ENCODE measurements at regions of chr10 and their contacts with region 1.

Region 1: GRCh38 chr10:35642027-35642792 is at the start of gene FZD8:
- DNase-seq: peak; percentile 92
- H3K4me3 Mint-ChIP-seq: peak within 1 kb of the TSS; percentile 85
- H3K27ac Mint-ChIP-seq: peak within 1 kb of the TSS; percentile 31
- H3K4me1 Mint-ChIP-seq: peaks cover 6% of the 10 kb centered on the region
- H3K27me3 Mint-ChIP-seq: no peaks in the 10 kb centered on the region
- CTCF ChIP-seq: no peak
- total RNA-seq, gene FZD8: 9.8 and 13.0 TPM in 2 replicates

Region 2: DNA sequence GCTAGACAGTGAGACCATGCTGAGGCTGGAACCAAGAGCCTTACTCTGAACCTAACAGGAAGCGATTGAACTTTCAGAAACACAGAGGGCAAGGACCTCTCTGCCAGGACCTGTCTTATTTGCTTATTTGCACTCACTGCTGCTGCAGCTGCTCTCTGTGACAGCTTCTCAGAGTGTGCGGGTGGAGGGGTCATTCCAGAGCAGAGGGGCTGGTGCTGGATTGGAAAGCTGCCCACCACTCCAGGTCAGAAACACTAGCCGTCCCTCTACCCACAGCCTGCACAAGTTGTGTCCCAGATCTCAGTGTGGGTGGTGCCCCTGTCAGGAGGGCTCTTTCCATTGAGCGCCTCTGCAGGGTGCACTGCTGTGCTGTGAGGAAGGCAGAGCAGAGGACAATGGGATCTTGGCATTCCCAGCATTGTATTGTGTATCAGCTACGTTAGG is 179.7 kb before region 1 on chr10:
- CTCF ChIA-PET with region 1: no interaction called
- POLR2A ChIA-PET with region 1: no interaction called
- intact Hi-C with region 1: no loop called
- DNase-seq: no peak
- H3K4me3 Mint-ChIP-seq: no peak overlapping the region
- H3K27ac Mint-ChIP-seq: no peak overlapping the region
- H3K4me1 Mint-ChIP-seq: peaks cover 21% of the 10 kb centered on the region
- H3K27me3 Mint-ChIP-seq: no peaks in the 10 kb centered on the region
- CTCF ChIP-seq: no peak

Region 3: DNA sequence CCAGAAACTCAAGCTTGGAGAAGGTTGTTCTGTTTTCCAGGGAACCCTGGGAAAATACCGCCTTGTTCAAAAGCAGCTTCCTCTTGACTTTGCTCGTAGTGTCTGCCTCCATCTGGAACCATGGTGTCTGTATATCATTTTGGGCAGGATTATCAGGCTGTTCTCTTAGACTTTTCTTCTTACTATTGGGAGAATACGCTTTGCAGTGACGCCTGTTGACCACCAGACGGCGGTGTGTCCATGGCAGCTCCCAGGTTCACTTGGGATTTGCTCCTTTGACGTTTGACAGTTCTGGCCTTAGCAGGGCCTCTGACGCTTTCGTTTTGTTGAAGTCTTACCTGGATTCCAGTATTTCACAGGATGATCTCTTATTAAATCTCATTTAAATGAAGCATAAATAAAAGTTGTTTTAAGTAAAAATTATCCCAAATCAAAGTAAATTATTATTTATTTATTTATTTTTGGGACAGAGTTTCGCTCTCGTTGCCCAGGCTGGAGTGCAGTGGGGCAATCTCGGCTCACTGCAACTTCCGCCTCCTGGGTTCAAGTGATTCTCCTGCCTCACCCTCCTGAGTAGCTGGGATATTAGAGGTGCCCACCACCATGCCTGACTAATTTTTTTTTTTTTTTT is 78.8 kb before region 1 on chr10:
- CTCF ChIA-PET with region 1: no interaction called
- POLR2A ChIA-PET with region 1: no interaction called
- intact Hi-C with region 1: no loop called
- DNase-seq: peak; percentile 79
- H3K4me3 Mint-ChIP-seq: no peak overlapping the region
- H3K27ac Mint-ChIP-seq: no peak overlapping the region
- H3K4me1 Mint-ChIP-seq: no peaks in the 10 kb centered on the region
- H3K27me3 Mint-ChIP-seq: no peaks in the 10 kb centered on the region
- CTCF ChIP-seq: peak; percentile 97

Region 4: GRCh38 chr10:35626971-35627507 is 15.2 kb before region 1 on chr10:
- CTCF ChIA-PET with region 1: no interaction called
- POLR2A ChIA-PET with region 1: no interaction called
- intact Hi-C with region 1: no loop called
- DNase-seq: no peak
- H3K4me3 Mint-ChIP-seq: no peak overlapping the region
- H3K27ac Mint-ChIP-seq: no peak overlapping the region
- H3K4me1 Mint-ChIP-seq: no peaks in the 10 kb centered on the region
- H3K27me3 Mint-ChIP-seq: no peaks in the 10 kb centered on the region
- CTCF ChIP-seq: no peak

Region 5: DNA sequence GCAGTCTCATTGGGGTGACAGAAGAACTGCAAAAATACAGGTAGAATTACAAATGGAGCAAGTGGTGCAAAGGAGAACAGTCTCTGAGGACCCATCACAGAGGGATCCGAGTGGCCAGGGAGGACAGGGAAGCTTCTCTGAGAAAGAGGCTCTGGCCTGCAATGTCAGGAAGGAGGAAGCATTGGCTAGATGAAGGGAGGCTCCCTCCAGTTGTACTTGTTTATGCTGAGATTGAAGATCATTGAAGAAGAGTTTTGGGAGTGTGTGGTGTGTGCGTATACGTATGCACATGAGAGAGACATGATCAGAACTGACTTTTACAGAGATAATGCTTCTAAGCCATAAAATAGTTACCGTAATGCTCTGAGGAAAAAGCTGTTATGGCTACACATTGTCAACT is 274.6 kb after region 1 on chr10:
- CTCF ChIA-PET with region 1: no interaction called
- POLR2A ChIA-PET with region 1: no interaction called
- intact Hi-C with region 1: loop called (anchors 2 kb)
- DNase-seq: no peak
- H3K4me3 Mint-ChIP-seq: no peak overlapping the region
- H3K27ac Mint-ChIP-seq: no peak overlapping the region
- H3K4me1 Mint-ChIP-seq: peaks cover 13% of the 10 kb centered on the region
- H3K27me3 Mint-ChIP-seq: no peaks in the 10 kb centered on the region
- CTCF ChIP-seq: no peak

Region 6: GRCh38 chr10:36271627-36272340 is 629.6 kb after region 1 on chr10:
- CTCF ChIA-PET with region 1: no interaction called
- POLR2A ChIA-PET with region 1: no interaction called
- intact Hi-C with region 1: loop called (anchors 5 kb)
- DNase-seq: peak; percentile 65
- H3K4me3 Mint-ChIP-seq: peak overlapping the region; percentile 32
- H3K27ac Mint-ChIP-seq: peak overlapping the region; percentile 98
- H3K4me1 Mint-ChIP-seq: peaks cover 26% of the 10 kb centered on the region
- H3K27me3 Mint-ChIP-seq: no peaks in the 10 kb centered on the region
- CTCF ChIP-seq: no peak

Region 7: DNA sequence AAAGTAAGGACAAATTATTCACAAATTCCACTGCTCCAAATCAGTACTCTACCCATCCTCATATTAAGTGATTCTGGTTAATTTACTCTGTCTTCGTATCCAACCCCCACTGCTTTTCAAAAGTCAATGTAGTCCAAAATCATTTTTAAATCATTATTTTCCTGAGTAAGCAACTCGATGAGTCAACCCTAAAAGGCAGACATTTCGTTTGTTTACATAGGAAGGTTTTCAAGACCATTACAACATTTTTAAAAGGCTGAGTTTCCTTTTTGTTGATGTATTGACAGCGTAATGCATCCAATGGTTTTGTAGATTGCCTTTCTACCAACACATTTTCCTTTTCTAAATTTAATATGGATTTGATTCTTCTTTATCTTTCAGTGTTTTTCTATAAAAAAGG is 960.2 kb after region 1 on chr10:
- CTCF ChIA-PET with region 1: no interaction called
- POLR2A ChIA-PET with region 1: no interaction called
- intact Hi-C with region 1: loop called (anchors 10 kb)
- DNase-seq: peak; percentile 69
- H3K4me3 Mint-ChIP-seq: no peak overlapping the region
- H3K27ac Mint-ChIP-seq: peak overlapping the region; percentile 87
- H3K4me1 Mint-ChIP-seq: peaks cover 14% of the 10 kb centered on the region
- H3K27me3 Mint-ChIP-seq: no peaks in the 10 kb centered on the region
- CTCF ChIP-seq: no peak

Region 8: DNA sequence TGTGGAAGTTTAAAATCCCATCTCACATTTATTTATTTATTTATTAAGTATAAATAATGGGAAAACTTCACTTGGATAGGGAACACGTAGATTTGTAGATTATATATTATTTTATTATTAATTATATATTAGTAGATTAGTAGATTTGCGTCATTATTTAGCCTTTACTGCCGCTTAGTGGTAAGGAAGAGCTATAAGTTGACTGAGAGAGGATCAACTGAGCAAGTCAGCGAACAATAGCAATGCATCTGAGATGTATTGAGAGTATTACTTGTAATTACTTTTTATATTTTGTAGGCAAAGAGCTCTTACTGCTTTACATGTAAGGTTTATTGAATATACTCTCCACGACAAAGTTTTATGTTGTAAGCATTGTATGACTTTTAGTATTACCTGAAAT is 1238.7 kb after region 1 on chr10:
- CTCF ChIA-PET with region 1: interaction called, 13 read pairs
- POLR2A ChIA-PET with region 1: no interaction called
- intact Hi-C with region 1: no loop called
- DNase-seq: peak; percentile 32
- H3K4me3 Mint-ChIP-seq: no peak overlapping the region
- H3K27ac Mint-ChIP-seq: no peak overlapping the region
- H3K4me1 Mint-ChIP-seq: no peaks in the 10 kb centered on the region
- H3K27me3 Mint-ChIP-seq: peaks cover 31% of the 10 kb centered on the region
- CTCF ChIP-seq: peak; percentile 68